Lower lobe of right lung (tissue), 2 donors: ENCODE measurements at regions of chr11 and their contacts with region 1.

Region 1: GRCh38 chr11:118198370-118198769 is 21.9 kb upstream of the SCN2B start:
- DNase-seq: peak; percentile 88
- ATAC-seq: peak; percentile 73 to 81
- H3K4me3 ChIP-seq: no peak overlapping the region
- H3K27ac ChIP-seq: no peak overlapping the region
- H3K4me1 ChIP-seq: peaks cover 18% of the 10 kb centered on the region
- H3K27me3 ChIP-seq: no peaks in the 10 kb centered on the region
- CTCF ChIP-seq: peak; percentile 89

Region 2: GRCh38 chr11:118290923-118291322 is 92.6 kb after region 1 on chr11:
- intact Hi-C with region 1: loop called (anchors 5 kb)
- DNase-seq: no peak
- ATAC-seq: peak; percentile 88 to 95
- H3K4me3 ChIP-seq: no peak overlapping the region
- H3K27ac ChIP-seq: no peak overlapping the region
- H3K4me1 ChIP-seq: peaks cover 5% of the 10 kb centered on the region
- H3K27me3 ChIP-seq: no peaks in the 10 kb centered on the region
- CTCF ChIP-seq: peak; percentile 56

Region 3: DNA sequence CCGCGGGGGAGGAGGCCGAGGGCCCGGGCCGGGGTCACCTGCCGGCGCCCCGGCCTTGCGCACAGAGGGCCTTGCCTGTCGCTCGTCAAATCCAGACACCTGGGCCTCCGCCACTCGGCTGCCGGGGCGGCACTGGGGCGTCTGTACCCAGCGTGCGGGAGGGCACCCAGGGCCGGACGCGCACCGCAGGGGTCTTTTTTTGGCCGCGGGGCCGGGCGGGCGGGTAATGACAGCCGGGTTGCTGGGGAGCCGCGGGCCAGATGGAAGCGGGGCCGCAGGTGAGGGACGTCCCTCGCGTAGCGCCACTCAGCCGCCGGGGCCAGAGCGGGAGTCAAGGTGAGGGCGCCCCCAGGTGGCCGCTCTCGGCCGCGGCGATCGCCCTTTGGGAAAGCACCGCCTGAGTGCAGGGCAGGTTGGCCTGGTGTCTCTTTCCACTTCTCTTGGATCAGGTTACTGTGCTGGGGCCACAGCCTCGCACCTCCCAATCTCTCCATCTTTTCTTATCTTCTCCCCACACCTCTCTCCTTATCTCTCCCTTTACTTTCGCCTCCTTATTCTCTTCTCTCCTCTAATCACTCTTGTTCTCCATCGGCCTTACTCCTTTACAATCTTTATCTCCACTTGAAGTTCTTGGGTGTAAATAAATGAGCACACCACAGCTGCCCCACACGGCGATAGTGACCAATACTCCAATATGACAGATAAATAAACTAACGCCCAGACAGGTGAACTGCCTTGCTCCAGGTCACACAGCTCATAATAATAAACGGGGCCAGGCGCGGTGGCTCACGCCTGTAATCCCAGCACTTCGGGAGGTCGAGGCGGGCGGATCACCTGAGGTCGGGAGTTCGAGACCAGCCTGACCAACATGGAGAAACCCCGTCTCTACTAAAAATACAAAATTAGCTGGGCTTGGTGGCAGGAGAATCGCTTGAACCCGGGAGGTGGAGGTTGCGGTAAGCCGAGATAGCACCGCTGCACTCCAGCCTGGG is 412.7 kb after region 1 on chr11:
- intact Hi-C with region 1: no loop called
- DNase-seq: peak; percentile 90
- ATAC-seq: peak; percentile 72 to 79
- H3K4me3 ChIP-seq: peak overlapping the region; percentile 67
- H3K27ac ChIP-seq: peak overlapping the region; percentile 87
- H3K4me1 ChIP-seq: peaks cover 44% of the 10 kb centered on the region
- H3K27me3 ChIP-seq: peaks cover 8% of the 10 kb centered on the region
- CTCF ChIP-seq: peak; percentile 92